ENCODE measurements at regions of chr2 and their contacts with region 1.

Region 1: GRCh38 chr2:72539071-72539552 is 286.7 kb downstream of the EXOC6B start:
- DNase-seq: no peak

Region 2: GRCh38 chr2:72220170-72220569 is 318.9 kb before region 1 on chr2:
- CTCF ChIA-PET with region 1: interaction called, 11 read pairs
- POLR2A ChIA-PET with region 1: no interaction called
- DNase-seq: peak; percentile 32

Region 3: DNA sequence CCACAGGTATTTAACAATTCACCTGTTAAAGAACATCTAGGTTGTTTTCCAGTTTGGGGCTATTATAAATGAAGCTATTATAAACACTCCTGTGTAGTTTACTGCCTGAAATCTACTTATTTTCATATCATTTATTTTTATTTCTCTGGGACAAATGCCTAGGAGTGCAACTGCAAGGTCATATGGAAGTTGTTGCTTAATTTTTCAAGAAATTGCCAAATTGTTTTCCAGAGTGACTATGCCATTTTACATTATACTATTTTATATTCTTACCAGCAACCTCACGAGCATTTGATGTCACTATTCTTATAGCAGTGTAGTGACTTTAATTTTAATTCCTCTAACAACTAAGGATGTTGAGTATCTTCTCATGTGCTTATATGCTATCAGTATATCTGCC is 11.7 kb before region 1 on chr2:
- CTCF ChIA-PET with region 1: no interaction called
- POLR2A ChIA-PET with region 1: no interaction called
- DNase-seq: no peak

Region 4: DNA sequence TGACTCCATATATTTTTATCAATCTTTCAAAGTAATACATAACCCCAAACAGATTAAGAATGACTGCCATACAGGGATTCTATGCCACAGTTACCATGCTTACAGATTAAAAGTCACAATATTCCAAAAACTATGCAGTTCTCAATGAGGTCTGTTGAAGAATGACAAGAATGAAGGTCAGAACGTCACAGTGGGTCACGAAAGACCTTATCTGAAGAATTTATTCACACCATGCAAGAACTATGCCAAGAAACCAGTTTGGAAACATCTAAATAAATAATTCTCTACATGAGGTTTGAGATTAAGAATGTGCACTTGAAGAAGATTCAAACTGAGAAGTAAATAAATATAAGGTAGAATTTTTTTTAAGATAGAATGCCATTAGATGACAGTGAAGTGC is 33.4 kb after region 1 on chr2:
- CTCF ChIA-PET with region 1: no interaction called
- POLR2A ChIA-PET with region 1: no interaction called
- DNase-seq: no peak